ENCODE measurements at regions of chr7 and their contacts with region 1.

Region 1: DNA sequence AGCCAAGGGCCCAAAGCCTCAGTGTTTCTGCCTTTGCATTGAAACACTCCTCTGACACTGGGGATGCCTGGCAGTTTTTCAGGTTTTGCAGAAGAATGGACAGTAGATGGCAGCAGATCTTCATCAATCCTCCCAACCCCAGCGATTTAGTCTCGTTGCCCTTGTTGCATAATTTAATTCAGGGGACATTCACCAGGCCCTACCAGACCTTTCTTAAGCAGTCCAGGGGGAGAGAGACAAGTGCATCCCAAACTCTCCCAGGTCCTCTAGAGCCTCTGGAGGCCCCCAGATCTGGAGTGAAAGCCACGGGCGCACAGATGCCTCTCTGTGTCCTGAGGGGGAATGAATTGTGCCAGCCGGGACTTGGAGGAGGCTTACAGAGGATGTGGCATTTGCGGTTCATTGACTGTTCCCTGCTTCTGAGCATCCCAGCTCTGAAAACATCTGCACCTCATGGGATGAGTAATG is 29.6 kb downstream of the MINDY4 start:
- DNase-seq: peak; percentile 76
- H3K4me3 Mint-ChIP-seq: no peak overlapping the region
- H3K27ac Mint-ChIP-seq: no peak overlapping the region
- H3K4me1 Mint-ChIP-seq: peaks cover 51% of the 10 kb centered on the region
- H3K27me3 Mint-ChIP-seq: no peaks in the 10 kb centered on the region
- CTCF ChIP-seq: peak; percentile 92

Region 2: DNA sequence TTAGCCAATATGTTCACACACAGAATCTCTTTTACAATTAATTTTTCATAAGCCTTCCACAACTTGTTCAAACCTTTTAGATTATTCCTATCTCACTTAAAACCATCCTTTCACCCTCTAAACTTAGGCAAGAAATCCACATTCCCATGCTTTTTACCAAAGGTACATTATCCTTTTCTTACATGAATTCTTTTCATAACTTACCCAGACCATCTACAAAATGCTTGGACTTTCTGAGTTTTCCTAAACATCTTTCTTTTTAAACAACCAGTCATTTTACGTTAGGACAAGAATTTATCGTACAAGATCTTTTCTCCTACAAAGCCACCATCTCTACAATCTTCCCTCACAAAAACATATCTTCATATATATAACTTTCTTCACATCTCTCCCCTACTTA is 224.9 kb before region 1 on chr7:
- CTCF ChIA-PET with region 1: no interaction called
- intact Hi-C with region 1: no loop called
- DNase-seq: no peak
- H3K4me3 Mint-ChIP-seq: no peak overlapping the region
- H3K27ac Mint-ChIP-seq: no peak overlapping the region
- H3K4me1 Mint-ChIP-seq: no peaks in the 10 kb centered on the region
- H3K27me3 Mint-ChIP-seq: no peaks in the 10 kb centered on the region
- CTCF ChIP-seq: no peak

Region 3: DNA sequence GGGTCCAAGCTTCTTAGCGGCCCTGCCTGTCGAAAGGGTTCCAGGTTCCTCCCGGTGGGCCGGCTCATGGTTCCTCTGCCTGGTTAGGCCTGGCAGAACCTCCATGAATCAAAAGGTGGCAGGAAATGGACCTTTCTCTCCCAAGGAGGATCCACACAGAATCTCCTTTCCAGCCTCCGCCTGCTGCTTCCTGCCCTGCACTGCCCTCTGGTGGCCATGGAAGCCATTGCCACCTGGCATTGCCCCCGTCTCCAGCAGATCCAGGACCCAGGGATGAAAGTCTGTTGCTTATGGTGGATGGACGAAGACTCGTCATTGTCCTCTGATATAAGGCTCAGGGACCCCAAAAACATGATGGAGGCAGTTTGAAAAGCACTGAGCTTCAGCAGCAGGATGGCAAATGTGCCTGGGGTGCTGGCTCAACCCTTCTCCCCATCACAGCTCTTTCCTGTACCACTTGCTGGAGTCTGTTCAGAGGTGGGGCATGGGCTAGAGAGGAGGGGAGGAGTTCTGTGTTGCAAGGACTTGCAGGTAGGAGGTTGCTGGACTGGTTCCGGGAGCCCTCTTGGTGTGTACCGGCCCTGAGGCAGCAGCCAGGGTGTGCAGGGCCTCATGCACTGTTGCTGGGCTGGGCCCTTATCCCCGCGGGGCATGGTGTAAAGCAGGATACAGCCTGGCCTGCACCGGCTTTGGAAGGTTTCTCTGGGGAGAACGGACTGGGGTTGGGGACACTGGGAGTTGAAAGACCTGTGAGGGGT is 60.2 kb before region 1 on chr7:
- CTCF ChIA-PET with region 1: no interaction called
- intact Hi-C with region 1: loop called (anchors 2 kb)
- DNase-seq: peak; percentile 92
- H3K4me3 Mint-ChIP-seq: no peak overlapping the region
- H3K27ac Mint-ChIP-seq: no peak overlapping the region
- H3K4me1 Mint-ChIP-seq: peaks cover 8% of the 10 kb centered on the region
- H3K27me3 Mint-ChIP-seq: peaks cover 65% of the 10 kb centered on the region
- CTCF ChIP-seq: peak; percentile 98

Region 4: GRCh38 chr7:30896783-30897637 is 96.2 kb after region 1 on chr7:
- CTCF ChIA-PET with region 1: interaction called, 4 read pairs
- intact Hi-C with region 1: loop called (anchors 1 kb)
- DNase-seq: peak; percentile 78
- H3K4me3 Mint-ChIP-seq: peak overlapping the region; percentile 15
- H3K27ac Mint-ChIP-seq: peak overlapping the region; percentile 62
- H3K4me1 Mint-ChIP-seq: peaks cover 44% of the 10 kb centered on the region
- H3K27me3 Mint-ChIP-seq: no peaks in the 10 kb centered on the region
- CTCF ChIP-seq: no peak

Region 5: DNA sequence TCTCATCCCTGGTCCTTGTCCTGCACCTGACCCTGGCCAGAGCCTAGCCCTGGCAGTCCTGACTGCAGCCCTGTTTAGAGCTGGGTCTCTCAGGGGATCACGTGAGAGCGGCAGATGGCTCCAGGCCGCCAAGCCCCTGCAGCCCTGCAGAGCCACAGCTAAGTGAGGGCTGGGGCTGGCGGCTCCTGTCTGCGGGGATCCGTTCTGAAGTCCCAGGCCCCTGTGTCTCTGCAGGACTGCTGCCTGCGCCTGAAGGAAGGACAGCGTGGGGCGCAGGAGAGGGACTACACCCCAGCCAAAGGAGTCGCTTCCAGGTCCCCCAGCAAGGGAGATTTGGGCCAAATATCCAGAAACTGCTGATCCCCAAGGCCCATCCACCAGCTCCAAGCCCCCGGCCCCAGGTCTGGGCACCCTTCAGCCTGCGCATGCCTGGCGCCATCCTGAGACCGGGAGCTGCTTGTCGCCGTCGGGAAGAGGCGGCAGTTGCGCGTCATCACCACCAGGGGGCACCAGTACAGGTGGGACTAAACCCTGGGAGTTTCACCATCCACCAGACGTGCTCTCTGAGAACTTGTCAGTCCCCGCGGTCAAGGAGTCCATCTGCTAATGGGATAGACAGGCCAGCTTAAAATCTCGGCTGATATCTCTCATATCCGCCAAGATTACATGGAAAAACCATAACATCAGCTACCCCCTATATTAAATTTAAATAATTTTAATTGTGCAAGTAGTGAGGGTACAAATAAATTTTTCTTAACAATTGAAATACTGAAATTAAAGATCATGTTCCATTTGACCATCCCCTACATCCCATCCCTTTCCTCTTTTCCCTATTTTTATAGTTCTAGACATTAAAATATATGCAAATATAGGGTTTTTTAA is 137.9 kb after region 1 on chr7:
- CTCF ChIA-PET with region 1: interaction called, 9 read pairs
- intact Hi-C with region 1: loop called (anchors 2 kb)
- DNase-seq: peak; percentile 99
- H3K4me3 Mint-ChIP-seq: no peak overlapping the region
- H3K27ac Mint-ChIP-seq: no peak overlapping the region
- H3K4me1 Mint-ChIP-seq: peaks cover 72% of the 10 kb centered on the region
- H3K27me3 Mint-ChIP-seq: no peaks in the 10 kb centered on the region
- CTCF ChIP-seq: peak; percentile 99

Region 6: DNA sequence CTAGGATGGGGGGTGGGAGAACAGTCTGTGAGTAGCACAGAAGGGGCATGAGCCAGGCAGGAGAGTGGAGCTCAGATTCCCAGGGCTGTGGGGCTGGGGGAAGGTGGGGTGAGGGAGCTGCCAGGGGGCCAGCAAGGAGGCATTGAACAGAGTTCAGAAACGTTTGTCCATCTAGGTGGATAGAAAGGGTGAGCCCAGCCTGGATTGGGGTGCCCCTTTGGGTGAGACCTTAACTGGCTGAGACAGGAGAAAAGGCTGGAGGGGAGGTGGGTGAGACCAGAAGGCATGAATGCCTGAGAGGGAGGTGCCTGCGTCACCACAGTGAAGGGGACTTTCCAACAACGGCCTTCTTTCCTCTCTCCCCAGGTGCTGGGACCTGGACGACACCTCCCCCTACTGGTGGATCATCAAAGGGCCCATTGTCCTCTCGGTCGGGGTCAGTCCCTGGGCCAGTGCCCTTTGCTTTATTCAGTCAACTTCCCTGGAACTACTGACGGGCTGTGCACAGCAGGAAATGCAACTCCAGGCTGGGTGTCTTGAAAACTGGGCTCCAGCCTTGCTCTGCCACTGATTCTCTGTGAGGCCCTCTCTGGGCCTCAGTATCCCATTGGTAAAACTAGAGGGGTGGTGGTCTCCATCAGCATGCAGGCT is 173.9 kb after region 1 on chr7:
- CTCF ChIA-PET with region 1: interaction called, 9 read pairs
- intact Hi-C with region 1: loop called (anchors 1 kb)
- DNase-seq: peak; percentile 98
- H3K4me3 Mint-ChIP-seq: no peak overlapping the region
- H3K27ac Mint-ChIP-seq: peak overlapping the region; percentile 94
- H3K4me1 Mint-ChIP-seq: peaks cover 65% of the 10 kb centered on the region
- H3K27me3 Mint-ChIP-seq: peaks cover 34% of the 10 kb centered on the region
- CTCF ChIP-seq: peak; percentile 97

Region 7: DNA sequence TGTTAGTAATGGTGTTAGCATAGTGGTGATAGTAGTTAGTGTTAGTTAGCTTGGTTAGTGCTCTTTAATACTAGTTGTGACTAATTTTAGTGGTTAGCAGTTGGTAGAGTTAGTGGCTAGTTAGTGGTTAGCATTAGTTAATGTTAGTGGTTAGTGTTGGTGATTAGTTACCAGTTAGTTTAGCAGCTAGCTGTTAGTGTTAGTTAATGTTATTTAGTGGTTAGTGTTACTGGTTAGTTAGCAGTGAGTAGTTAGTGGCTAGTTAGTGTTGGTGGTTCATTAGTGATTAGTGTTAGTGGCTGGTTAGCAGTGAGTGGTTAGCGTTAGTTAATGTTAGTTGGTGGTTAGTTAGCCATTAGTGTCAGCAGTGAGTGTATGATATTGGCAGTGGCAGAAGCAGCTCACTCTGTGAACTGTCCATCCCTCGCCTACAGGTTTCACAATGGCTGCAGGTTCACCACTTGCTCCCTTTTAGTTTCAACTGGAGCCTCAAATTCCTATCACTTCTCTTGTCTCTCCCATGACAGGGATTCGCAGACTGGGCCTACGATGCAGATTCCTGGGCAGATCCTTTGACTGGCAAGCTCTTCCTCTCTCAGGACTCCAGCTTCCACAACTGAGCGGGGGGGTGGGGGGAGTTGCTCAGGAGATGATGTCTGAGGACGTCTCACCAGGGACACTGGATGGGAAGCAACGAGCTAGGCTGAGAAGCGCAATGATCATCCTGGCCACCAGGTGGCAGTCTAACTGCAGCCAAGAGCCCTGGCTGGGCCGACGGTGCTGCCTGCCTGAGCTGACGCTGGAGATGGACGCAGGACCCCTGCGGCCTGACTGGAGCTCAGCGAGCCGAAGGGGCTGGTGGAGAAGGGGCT is 182.5 kb after region 1 on chr7:
- CTCF ChIA-PET with region 1: interaction called, 11 read pairs
- intact Hi-C with region 1: loop called (anchors 1 kb)
- DNase-seq: peak; percentile 96
- H3K4me3 Mint-ChIP-seq: peak overlapping the region; percentile 13
- H3K27ac Mint-ChIP-seq: no peak overlapping the region
- H3K4me1 Mint-ChIP-seq: peaks cover 30% of the 10 kb centered on the region
- H3K27me3 Mint-ChIP-seq: peaks cover 51% of the 10 kb centered on the region
- CTCF ChIP-seq: peak; percentile 97

Region 8: DNA sequence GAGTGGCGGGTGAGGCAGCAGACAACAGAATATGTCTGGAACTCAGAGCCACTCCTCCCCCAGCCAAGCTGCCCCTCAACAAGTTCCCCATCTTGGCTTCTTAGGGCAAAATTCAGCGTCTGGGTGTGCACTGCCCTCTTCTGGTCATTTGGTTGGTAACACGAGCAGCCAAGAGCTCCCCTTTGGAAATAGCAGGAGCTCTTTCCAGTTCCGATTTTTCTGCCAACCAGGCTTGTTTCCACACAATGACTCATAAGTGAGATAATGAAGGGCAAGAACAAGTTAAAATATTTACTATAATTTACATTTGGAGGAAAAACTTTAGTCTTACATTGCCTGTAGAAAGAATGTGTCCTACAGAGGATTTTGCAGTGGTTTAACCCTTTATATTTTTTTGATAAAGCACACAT is 321.8 kb after region 1 on chr7:
- CTCF ChIA-PET with region 1: interaction called, 10 read pairs
- intact Hi-C with region 1: loop called (anchors 1 kb)
- DNase-seq: peak; percentile 82
- H3K4me3 Mint-ChIP-seq: no peak overlapping the region
- H3K27ac Mint-ChIP-seq: no peak overlapping the region
- H3K4me1 Mint-ChIP-seq: peaks cover 7% of the 10 kb centered on the region
- H3K27me3 Mint-ChIP-seq: peaks cover 78% of the 10 kb centered on the region
- CTCF ChIP-seq: peak; percentile 85